Posterior cingulate gyrus (tissue), 11 donors: ENCODE measurements at regions of chr4 and their contacts with region 1.

Region 1: GRCh38 chr4:26319467-26319948 is 1.3 kb upstream of the RBPJ start:
- DNase-seq: peak; percentile 93 to 99 (median 97)

Region 2: GRCh38 chr4:25925486-25926201 is 393.9 kb before region 1 on chr4:
- intact Hi-C with region 1: loop called (anchors 10 kb)
- DNase-seq: peak in 9 of 10 donors; percentile 38 to 92 (median 52)

Region 3: DNA sequence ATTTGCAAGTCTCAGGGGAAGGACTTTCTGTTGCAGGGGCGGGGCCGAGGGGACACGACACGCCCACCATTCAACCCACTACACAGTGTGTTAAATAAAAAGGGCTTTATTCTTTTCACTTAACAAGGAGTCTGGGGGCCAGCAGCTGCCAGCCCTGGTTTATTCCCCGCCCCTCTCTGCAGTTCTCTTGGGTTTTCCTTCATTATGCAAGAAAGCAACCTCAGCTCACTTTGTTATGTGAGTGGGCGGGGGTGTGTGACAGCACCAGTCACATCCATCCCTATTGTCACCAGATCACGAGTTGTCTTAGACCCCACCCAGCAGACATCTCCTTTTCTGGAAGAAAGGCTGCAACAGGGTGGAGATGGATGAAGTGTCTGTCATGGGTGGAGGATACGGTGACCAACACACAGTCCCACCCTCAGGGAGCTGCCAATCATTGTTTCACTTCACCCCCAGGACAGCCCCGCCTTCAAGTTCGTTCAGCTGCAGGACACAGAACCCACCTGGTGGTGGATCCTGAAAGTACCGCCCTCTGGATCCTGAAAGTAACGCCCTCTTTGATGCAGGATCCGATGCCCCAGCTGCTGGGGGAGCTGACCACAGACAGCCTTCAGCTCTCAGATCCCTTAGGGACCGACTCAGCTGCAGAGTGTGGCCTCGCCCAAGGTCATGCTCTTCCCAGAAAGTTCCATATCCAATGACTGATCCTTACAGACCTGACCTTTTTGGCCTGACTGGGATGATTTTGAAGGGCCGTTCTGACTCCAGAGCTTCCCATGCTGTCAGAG is 325.9 kb before region 1 on chr4:
- intact Hi-C with region 1: loop called (anchors 2 kb)
- DNase-seq: no peak

Region 4: GRCh38 chr4:26081795-26082498 is 237.6 kb before region 1 on chr4:
- intact Hi-C with region 1: loop called (anchors 5 kb)
- DNase-seq: no peak